Common myeloid progenitor, CD34-positive (primary cell): ENCODE measurements at regions of chr5 and their contacts with region 1.

Region 1: DNA sequence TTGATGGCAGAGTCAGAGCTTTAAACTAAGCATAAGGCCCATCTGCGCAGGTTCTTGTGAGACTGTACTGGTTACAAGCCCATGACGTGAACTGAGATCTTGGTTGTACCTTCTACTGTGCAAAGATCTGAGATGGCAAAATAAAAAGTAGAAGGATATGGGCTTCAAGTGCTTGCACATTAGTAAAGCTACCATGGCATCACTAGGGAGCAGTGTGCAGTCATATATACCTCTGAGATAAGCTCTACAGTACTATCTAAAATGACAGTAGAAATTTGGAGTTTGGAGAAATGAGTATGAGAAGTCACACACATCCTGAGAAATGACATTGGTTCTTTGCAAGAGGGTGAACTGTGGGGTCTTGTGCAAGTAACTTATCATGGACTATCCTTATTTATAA is 408.2 kb upstream of the PRR16 start:
- DNase-seq: peak; percentile 62 to 74 (median 74)
- H3K4me3 ChIP-seq: no peak overlapping the region
- H3K27ac ChIP-seq: no peak overlapping the region
- H3K4me1 ChIP-seq: no peaks in the 10 kb centered on the region
- H3K27me3 ChIP-seq: no peaks in the 10 kb centered on the region

Region 2: DNA sequence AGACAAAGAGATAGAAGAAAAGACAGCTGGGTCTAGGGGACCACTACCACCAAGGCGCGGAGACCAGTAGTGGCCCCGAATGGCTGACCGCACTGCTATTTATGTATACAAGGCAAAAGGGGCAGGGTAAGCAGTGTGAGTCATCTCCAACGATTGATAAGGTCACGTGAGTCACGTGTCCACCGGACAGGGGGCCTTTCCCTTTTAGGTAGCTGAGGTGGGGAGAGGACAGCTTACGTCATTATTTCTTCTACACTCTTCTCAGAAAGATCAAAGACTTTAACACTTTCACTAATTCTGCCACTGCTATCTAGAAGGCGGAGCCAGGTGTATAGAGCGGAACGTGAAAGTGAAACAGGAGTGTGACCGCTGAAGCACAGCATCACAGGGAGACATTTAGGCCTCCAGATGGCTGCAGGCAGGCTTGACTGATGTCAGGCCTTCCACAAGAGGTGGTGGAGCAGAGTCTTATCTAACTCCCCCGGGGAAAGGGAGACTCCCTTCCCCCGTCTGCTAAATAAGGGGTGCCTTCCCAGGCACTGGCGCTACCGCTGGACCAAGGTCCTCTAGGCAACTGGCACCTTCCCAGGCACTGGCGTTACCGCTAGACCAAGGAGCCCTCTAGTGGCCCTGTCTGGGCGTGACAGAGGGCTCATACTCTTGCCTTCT is 402.1 kb after region 1 on chr5:
- CTCF ChIA-PET with region 1: interaction called, 10 read pairs
- POLR2A ChIA-PET with region 1: no interaction called
- DNase-seq: peak; percentile 59 to 74 (median 60)
- H3K4me3 ChIP-seq: peak overlapping the region in 5 of 7 experiments; percentile 23 to 88 (median 61)
- H3K27ac ChIP-seq: no peak overlapping the region
- H3K4me1 ChIP-seq: peaks cover under 1 to 4% (median 2%) of the 10 kb centered on the region in 4 experiments
- H3K27me3 ChIP-seq: no peaks in the 10 kb centered on the region